GM12878 (cell line): ENCODE measurements at regions of chr9 and their contacts with region 1.

Region 1: DNA sequence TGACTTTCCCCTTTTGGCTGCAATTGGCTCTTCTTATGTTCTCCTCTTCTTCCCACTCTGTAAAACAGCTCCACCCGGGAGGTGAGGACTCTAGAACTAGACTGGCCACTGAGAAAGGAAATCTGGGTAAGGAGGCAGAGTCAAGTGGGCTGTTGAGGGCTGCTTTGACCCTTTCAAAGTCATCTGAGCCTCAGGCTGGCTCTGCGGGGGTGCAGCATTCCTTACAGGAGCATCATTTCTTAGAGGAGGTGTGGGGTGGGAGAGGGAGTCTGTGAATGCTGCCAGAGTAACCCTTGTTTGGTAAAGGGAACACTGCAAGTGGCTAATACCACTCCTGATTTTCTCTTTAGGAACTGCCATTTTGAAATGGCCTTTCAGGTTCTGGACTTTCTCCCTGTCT is 377.7 kb upstream of the SMARCA2 start:
- DNase-seq: no peak
- ATAC-seq: no peak
- H3K4me3 ChIP-seq: no peak overlapping the region
- H3K27ac ChIP-seq: no peak overlapping the region
- H3K4me1 ChIP-seq: no peaks in the 10 kb centered on the region
- H3K27me3 ChIP-seq: no peaks in the 10 kb centered on the region; a peak in 1 of 4 replicates
- CTCF ChIP-seq: no peak
- EP300 ChIP-seq: no peak
- POLR2A ChIP-seq: no peak
- RAD21 ChIP-seq: no peak

Region 2: GRCh38 chr9:684054-684890 is 953.1 kb before region 1 on chr9:
- CTCF ChIA-PET with region 1: no interaction called
- POLR2A ChIA-PET with region 1: no interaction called
- RAD21 ChIA-PET with region 1: no interaction called
- SMC1A ChIA-PET with region 1: no interaction called
- in situ Hi-C with region 1: no loop called
- intact Hi-C with region 1: loop called (anchors 10 kb)
- DNase-seq: no peak
- ATAC-seq: no peak
- H3K4me3 ChIP-seq: no peak overlapping the region
- H3K27ac ChIP-seq: no peak overlapping the region
- H3K4me1 ChIP-seq: no peaks in the 10 kb centered on the region
- H3K27me3 ChIP-seq: peaks cover 0 to 4% of the 10 kb centered on the region in 2 experiments; a peak in 1 of 4 replicates
- CTCF ChIP-seq: no peak
- EP300 ChIP-seq: no peak
- POLR2A ChIP-seq: no peak
- RAD21 ChIP-seq: no peak

Region 3: GRCh38 chr9:1659363-1660085 is 22.1 kb after region 1 on chr9:
- CTCF ChIA-PET with region 1: no interaction called
- POLR2A ChIA-PET with region 1: no interaction called
- RAD21 ChIA-PET with region 1: no interaction called
- SMC1A ChIA-PET with region 1: no interaction called
- in situ Hi-C with region 1: no loop called
- intact Hi-C with region 1: no loop called
- DNase-seq: no peak
- ATAC-seq: no peak
- H3K4me3 ChIP-seq: no peak overlapping the region
- H3K27ac ChIP-seq: no peak overlapping the region
- H3K4me1 ChIP-seq: no peaks in the 10 kb centered on the region
- H3K27me3 ChIP-seq: no peaks in the 10 kb centered on the region
- CTCF ChIP-seq: no peak
- EP300 ChIP-seq: no peak
- POLR2A ChIP-seq: no peak
- RAD21 ChIP-seq: no peak

Region 4: GRCh38 chr9:1722404-1722803 is 85.0 kb after region 1 on chr9:
- CTCF ChIA-PET with region 1: no interaction called
- POLR2A ChIA-PET with region 1: no interaction called
- RAD21 ChIA-PET with region 1: no interaction called
- SMC1A ChIA-PET with region 1: no interaction called
- in situ Hi-C with region 1: no loop called
- intact Hi-C with region 1: no loop called
- DNase-seq: no peak
- ATAC-seq: peak; percentile 84
- H3K4me3 ChIP-seq: no peak overlapping the region
- H3K27ac ChIP-seq: no peak overlapping the region
- H3K4me1 ChIP-seq: peaks cover 6% of the 10 kb centered on the region; the same call in 1 of the 2 replicates
- H3K27me3 ChIP-seq: no peaks in the 10 kb centered on the region
- CTCF ChIP-seq: no peak
- EP300 ChIP-seq: no peak
- POLR2A ChIP-seq: no peak
- RAD21 ChIP-seq: no peak